CD8-positive, alpha-beta T cell (primary cell): ENCODE measurements at regions of chr6 and their contacts with region 1.

Region 1: DNA sequence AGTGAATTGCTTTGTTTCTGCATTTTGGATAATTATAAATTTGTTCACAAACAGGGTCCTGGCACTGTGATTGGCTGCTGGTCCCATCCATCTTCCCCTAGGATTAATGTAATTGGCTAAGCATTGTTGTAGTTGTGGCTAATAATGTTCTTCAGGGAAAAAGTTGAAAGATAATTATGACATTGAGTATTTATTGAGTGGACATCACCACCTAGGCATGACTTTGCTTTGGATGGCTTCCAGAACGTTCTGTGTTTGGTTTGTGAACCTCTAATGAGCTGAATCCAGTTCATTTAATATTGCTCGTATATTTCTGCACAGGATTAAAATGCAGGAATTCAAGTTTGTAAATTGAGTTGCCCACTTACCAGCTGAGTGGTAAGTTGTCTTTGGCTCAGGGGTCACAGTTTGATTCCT is 55.1 kb downstream of the ARID1B start:
- DNase-seq: peak in 1 of 9 experiments; percentile 34
- ATAC-seq: no peak
- H3K4me3 ChIP-seq: no peak overlapping the region
- H3K4me3 Mint-ChIP-seq: no peak overlapping the region
- H3K27ac ChIP-seq: no peak overlapping the region
- H3K27ac Mint-ChIP-seq: no peak overlapping the region
- H3K4me1 ChIP-seq: peaks cover 12% of the 10 kb centered on the region
- H3K4me1 Mint-ChIP-seq: peaks cover 67% of the 10 kb centered on the region
- H3K27me3 ChIP-seq: no peaks in the 10 kb centered on the region
- H3K27me3 Mint-ChIP-seq: no peaks in the 10 kb centered on the region
- CTCF ChIP-seq: no peak

Region 2: DNA sequence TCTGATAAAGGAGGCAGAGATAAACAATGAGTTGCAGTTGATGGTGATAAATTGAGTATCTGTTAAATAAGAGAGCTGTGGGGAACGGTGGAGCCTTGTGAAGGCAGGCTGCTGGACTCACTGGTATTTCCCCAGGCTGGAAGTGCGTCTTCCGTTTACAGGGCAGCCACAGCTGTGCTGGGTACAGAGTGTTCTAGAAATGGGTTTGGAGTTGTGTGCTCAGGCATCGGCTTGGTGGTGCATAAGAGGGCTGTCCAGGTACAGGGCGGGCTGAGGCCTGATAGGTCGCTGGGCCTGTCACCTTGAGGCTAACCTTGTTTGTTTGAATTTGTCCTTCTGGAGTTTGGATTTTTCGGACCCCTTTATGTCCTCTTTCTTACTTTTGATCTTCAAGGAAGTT is 15.7 kb before region 1 on chr6:
- CTCF ChIA-PET with region 1: no interaction called
- POLR2A ChIA-PET with region 1: interaction called, 3 read pairs
- intact Hi-C with region 1: loop called in 1 of 2 experiments (anchors 2 kb)
- DNase-seq: no peak
- ATAC-seq: no peak
- H3K4me3 ChIP-seq: no peak overlapping the region
- H3K4me3 Mint-ChIP-seq: no peak overlapping the region
- H3K27ac ChIP-seq: no peak overlapping the region
- H3K27ac Mint-ChIP-seq: no peak overlapping the region
- H3K4me1 ChIP-seq: peaks cover 81% of the 10 kb centered on the region
- H3K4me1 Mint-ChIP-seq: peaks cover 85% of the 10 kb centered on the region
- H3K27me3 ChIP-seq: no peaks in the 10 kb centered on the region
- H3K27me3 Mint-ChIP-seq: no peaks in the 10 kb centered on the region
- CTCF ChIP-seq: no peak

Region 3: GRCh38 chr6:157867155-157867559 is 1034.9 kb after region 1 on chr6:
- CTCF ChIA-PET with region 1: no interaction called
- POLR2A ChIA-PET with region 1: no interaction called
- intact Hi-C with region 1: no loop called
- DNase-seq: peak in 4 of 9 experiments; percentile 26 to 34 (median 27)
- ATAC-seq: peak; percentile 50
- H3K4me3 ChIP-seq: no peak overlapping the region
- H3K4me3 Mint-ChIP-seq: no peak overlapping the region
- H3K27ac ChIP-seq: no peak overlapping the region
- H3K27ac Mint-ChIP-seq: peak overlapping the region; percentile 55
- H3K4me1 ChIP-seq: peaks cover 11% of the 10 kb centered on the region
- H3K4me1 Mint-ChIP-seq: peaks cover 35% of the 10 kb centered on the region
- H3K27me3 ChIP-seq: no peaks in the 10 kb centered on the region
- H3K27me3 Mint-ChIP-seq: no peaks in the 10 kb centered on the region
- CTCF ChIP-seq: no peak

Region 4: DNA sequence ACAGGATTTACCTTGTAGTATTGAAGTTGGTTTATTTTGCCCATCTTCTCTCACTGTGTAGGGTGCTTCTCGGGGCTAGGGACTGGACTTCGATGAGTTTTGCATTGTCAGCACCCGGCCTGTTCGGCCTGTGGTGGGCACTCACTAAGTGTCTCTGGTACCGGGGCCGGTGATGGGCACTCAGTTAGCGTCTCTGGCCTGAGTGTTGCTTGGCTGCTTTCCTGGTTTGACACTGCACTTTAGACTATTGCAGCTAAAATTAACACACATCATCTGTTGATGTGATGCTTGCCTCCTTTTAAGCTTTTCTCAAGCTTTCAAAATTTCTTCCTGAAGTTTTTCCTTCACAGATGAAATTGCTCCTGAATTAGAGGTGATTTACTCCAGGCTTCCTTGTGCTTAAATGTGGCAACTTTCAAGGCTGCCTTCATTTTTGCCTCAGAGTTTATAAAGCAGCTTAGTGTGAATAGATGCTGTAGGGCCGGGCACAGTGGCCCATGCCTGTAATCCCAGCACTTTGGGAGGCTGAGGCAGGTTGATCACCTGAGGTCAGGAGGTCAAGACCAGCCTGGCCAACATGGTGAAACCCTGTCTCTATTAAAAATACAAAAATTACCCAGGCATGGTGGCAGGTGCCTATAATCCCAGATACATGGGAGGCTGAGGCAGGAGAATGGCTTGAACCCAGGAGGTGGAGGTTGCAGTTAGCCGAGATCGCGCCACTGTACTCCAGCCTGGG is 1438.3 kb after region 1 on chr6:
- CTCF ChIA-PET with region 1: no interaction called
- POLR2A ChIA-PET with region 1: no interaction called
- intact Hi-C with region 1: no loop called
- DNase-seq: peak in 1 of 9 experiments; percentile 32
- ATAC-seq: no peak
- H3K4me3 ChIP-seq: peak overlapping the region in 1 of 2 experiments; percentile 17
- H3K4me3 Mint-ChIP-seq: peak overlapping the region; percentile 45
- H3K27ac ChIP-seq: peak overlapping the region; percentile 29 to 52
- H3K27ac Mint-ChIP-seq: peak overlapping the region; percentile 78
- H3K4me1 ChIP-seq: peaks cover 14% of the 10 kb centered on the region
- H3K4me1 Mint-ChIP-seq: peaks cover 27% of the 10 kb centered on the region
- H3K27me3 ChIP-seq: no peaks in the 10 kb centered on the region
- H3K27me3 Mint-ChIP-seq: no peaks in the 10 kb centered on the region
- CTCF ChIP-seq: no peak